Spleen (tissue), 13 donors: ENCODE measurements at regions of chr18 and their contacts with region 1.

Region 1: GRCh38 chr18:52439457-52439856 is 99.5 kb downstream of the DCC start:
- DNase-seq: no peak
- H3K4me3 ChIP-seq: no peak overlapping the region
- H3K27ac ChIP-seq: no peak overlapping the region
- H3K4me1 ChIP-seq: no peaks in the 10 kb centered on the region
- H3K27me3 ChIP-seq: no peaks in the 10 kb centered on the region
- CTCF ChIP-seq: no peak
- POLR2A ChIP-seq: no peak

Region 2: GRCh38 chr18:52510139-52510538 is 70.7 kb after region 1 on chr18:
- intact Hi-C with region 1: loop called (anchors 10 kb)
- DNase-seq: no peak
- H3K4me3 ChIP-seq: no peak overlapping the region
- H3K27ac ChIP-seq: no peak overlapping the region
- H3K4me1 ChIP-seq: no peaks in the 10 kb centered on the region
- H3K27me3 ChIP-seq: no peaks in the 10 kb centered on the region
- CTCF ChIP-seq: no peak
- POLR2A ChIP-seq: no peak